Brain microvascular endothelial cell (primary cell): ENCODE measurements at regions of chr18 and their contacts with region 1.

Region 1: GRCh38 chr18:22174341-22175145 is 5.2 kb downstream of the GATA6 start:
- DNase-seq: no peak
- H3K4me3 ChIP-seq: peak overlapping the region; percentile 86
- H3K27ac ChIP-seq: peak overlapping the region; percentile 87
- H3K27me3 ChIP-seq: no peaks in the 10 kb centered on the region
- CTCF ChIP-seq: no peak

Region 2: DNA sequence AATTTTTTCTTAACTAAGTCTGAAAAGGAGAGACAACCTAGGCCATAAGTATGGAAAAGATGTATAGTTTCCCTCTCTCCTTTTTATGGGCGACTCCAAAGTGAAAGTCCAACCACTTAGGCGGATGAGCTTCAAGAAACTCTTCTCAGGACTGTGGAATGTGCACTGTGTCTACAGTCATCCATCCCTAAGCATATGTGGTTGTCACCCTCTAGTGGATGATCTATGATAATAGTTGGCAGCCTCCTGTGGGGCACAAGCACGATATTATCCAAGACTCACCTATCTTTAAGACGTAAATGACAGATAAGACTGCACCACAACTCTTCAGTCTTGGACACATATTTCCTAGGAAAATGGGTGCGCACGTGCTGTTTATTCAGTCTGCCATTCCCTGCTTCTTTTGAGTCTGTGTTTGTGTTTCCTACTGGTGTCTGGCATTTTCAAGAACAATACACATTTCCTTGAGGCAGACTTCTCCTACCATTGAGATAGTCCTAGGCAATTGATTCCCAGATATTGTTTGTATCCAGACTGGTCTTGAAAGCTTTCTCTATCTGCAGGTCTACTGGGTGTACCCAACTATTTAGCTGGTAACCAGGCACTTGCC is 388.7 kb after region 1 on chr18:
- in situ Hi-C with region 1: loop called (anchors 25 kb)
- DNase-seq: peak; percentile 91
- H3K4me3 ChIP-seq: no peak overlapping the region
- H3K27ac ChIP-seq: peak overlapping the region; percentile 79
- H3K27me3 ChIP-seq: no peaks in the 10 kb centered on the region
- CTCF ChIP-seq: peak; percentile 82